Breast epithelium (tissue), 4 donors: ENCODE measurements at regions of chr12 and their contacts with region 1.

Region 1: DNA sequence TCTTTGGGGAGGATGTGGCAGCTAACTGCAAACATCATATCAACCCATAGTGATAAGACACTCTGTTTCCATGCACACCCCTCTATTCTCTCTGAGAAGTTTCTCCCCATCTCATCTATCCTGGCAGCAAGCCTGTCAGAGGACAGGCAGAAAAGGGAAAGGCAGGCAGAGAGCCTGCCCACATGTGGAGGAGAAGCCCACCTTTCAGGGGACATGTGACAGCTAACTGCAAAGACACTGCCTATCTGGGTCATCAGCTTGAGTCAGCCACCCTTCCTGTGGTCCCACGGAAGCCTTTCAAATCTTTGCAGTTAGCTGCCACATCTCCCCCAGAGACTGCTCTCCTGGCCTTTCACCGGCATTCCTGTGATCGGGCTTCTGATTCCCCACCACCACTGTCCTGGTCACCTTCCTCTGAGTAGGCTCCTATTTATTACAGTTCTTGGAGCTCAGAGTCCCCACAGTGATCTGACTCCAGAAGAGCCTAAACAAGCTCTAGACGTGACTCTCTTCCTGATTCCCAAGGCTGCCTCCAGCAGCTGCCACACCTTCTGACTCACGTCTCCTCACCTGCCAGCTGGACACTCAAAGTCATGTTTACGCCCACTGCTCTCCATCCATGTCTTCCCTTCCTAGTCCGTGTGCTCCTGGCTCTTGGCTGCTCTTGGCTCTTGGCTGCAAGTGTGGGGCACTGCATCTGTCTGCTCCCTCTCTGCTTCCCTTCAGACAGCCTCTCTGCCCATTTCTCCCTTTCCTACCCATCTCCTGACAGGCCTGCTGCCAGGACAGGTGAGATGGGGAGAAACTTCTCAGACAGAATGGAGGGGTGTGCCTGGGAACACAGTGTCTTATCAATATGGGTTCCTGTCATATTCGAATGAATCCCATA is 7.5 kb upstream of the KRT1 start:
- DNase-seq: peak; percentile 24 to 33
- H3K4me3 ChIP-seq: no peak overlapping the region
- H3K27ac ChIP-seq: no peak overlapping the region
- H3K4me1 ChIP-seq: no peaks in the 10 kb centered on the region
- H3K27me3 ChIP-seq: peaks cover 0 to 9% of the 10 kb centered on the region in 2 donors
- CTCF ChIP-seq: no peak
- POLR2A ChIP-seq: no peak

Region 2: DNA sequence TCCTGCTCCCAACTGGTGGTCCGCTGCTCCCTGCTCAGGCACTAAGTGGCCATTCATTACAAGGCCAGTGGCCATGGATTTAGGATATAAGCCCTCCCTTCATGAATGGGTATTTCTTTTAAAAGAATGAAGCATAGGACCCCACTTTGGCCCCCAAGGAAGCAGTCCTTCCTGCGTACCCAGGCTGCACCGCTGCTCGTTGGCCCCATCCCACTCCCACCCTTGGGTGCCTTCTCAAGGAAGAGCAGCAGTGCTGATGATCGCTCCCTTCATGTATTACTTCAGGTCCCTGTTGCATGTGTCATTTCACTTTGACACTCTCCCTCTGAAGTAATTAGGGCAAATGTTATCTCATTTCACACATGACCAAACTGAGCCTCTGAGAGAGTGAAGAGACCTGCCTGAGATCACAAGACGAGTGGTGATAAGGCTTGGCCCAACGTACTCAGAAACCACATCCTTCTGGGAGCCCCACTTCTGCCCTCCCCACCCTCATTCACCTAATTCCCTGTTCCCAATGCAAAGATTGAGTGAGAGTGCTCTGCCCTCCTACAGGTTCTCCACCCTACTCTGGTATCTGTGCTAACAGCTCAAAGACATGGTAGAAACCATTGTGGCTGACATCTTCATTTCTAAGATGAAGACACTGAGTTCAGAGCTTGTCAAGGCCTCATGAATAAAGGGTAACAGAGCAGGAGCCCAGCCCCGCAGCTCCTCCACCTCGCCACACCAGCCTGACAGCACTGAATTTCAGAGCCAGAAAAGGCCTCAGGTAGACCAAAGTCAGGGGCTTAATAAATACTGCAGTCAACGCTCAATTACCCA is 25.4 kb before region 1 on chr12:
- intact Hi-C with region 1: loop called (anchors 1 kb)
- DNase-seq: no peak
- H3K4me3 ChIP-seq: no peak overlapping the region
- H3K27ac ChIP-seq: no peak overlapping the region
- H3K4me1 ChIP-seq: no peaks in the 10 kb centered on the region
- H3K27me3 ChIP-seq: peaks cover 0 to 4% of the 10 kb centered on the region in 2 donors
- CTCF ChIP-seq: no peak
- POLR2A ChIP-seq: no peak

Region 3: GRCh38 chr12:52741392-52742195 is 53.9 kb after region 1 on chr12:
- intact Hi-C with region 1: no loop called
- DNase-seq: peak in 1 of 2 donors; percentile 61
- H3K4me3 ChIP-seq: no peak overlapping the region
- H3K27ac ChIP-seq: no peak overlapping the region
- H3K4me1 ChIP-seq: no peaks in the 10 kb centered on the region
- H3K27me3 ChIP-seq: peaks cover 0 to 11% of the 10 kb centered on the region in 2 donors
- CTCF ChIP-seq: no peak
- POLR2A ChIP-seq: no peak